ENCODE measurements at regions of chr4 and their contacts with region 1.

Region 1: DNA sequence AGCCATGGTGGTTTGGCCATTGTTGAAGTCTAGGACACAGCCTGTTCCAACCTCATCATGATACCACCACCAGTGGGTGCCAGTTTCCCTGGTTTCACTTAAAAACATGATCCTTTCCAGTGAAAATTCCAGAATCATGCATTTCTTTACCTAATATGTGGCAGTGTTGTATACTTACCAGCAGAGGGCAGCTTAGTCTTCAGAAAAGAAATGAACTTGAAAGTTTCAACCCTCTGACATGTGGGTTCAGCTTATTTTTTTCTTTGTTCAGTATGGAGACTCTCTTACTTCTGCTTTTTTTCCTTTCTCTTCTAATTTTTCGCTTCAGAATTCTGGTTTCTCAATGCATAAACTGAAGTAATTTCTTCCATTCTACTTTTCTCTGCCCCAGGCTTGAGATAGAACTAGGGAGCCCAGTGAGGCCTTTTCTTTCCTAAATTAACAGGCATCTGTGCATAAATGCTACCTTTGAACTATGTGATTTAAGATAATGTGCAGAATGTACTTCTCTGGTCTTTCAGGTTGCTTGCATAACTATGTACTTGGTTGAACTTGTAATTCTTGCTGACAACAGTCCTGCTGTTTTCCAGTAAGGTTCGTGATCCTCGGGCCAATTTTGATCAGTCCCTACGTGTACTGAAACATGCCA is 10.7 kb downstream of the LIAS start:
- DNase-seq: peak; percentile 79
- H3K4me3 ChIP-seq: no peak overlapping the region
- CTCF ChIP-seq: peak; percentile 81

Region 2: GRCh38 chr4:39341075-39341725 is 128.4 kb before region 1 on chr4:
- in situ Hi-C with region 1: no loop called
- DNase-seq: no peak
- H3K4me3 ChIP-seq: no peak overlapping the region
- CTCF ChIP-seq: no peak

Region 3: DNA sequence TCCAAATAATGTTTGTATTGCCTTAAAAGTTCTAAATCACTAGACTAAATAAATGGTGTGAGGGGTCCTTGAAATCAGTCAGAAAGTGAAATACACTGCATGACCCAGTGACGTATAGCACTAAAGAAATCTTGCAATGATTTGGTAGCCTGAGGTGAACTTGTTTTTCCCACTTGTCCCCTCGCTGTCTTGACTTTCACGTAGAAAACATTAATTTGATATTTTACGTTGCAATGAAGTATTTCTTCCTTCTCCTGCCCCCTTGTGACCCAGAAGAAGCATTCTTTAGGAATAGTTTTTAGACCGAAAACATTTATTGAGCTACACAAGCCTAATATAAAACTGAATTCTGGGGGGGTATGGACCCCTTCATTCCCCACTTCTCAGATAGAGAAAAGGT is 59.1 kb before region 1 on chr4:
- in situ Hi-C with region 1: no loop called
- DNase-seq: no peak
- H3K4me3 ChIP-seq: no peak overlapping the region
- CTCF ChIP-seq: peak; percentile 16

Region 4: GRCh38 chr4:39505581-39505980 is 36.0 kb after region 1 on chr4:
- in situ Hi-C with region 1: loop called (anchors 5 kb)
- DNase-seq: no peak
- H3K4me3 ChIP-seq: no peak overlapping the region
- CTCF ChIP-seq: no peak

Measured in astrocyte of the cerebellum (primary cell).